ENCODE measurements at regions of chr6 and their contacts with region 1.

Region 1: DNA sequence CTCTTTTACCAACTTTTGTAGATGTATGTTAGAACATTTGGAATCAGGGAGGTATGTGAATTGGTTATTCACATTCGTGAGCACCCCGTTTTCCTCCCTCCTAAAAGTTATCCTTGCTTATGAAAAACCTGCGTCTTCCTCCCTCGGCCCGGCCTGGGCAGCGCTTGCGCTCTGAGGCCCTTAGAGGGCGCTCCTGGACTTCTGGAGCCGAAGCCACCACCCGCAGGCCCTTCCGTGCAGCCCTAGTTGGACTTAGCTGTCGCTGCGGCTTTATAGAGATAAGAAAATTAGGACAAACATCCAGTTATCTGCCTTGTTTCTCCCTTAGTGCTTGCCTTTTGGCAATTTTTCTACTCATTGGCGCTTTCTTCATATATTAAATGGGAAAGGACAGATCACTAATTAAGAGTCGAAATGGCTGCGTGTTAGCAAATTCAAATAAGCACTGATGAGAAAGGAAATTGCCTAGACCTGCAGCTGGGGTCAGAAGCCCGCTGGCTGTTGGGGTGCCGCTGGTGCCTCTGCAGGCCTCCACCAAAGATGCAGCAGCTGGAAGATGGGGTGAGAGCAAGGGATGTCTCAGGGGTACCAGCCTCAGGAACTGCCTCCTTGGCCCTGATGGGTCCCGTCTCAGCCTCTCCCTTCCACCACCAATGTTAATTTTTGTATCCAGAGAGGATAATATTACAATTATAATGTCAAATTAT is 5.2 kb downstream of the FNDC1 start:
- DNase-seq: peak; percentile 74 to 83
- H3K4me3 ChIP-seq: no peak overlapping the region
- H3K4me1 ChIP-seq: no peaks in the 10 kb centered on the region
- H3K27me3 ChIP-seq: peaks cover 52% of the 10 kb centered on the region

Region 2: DNA sequence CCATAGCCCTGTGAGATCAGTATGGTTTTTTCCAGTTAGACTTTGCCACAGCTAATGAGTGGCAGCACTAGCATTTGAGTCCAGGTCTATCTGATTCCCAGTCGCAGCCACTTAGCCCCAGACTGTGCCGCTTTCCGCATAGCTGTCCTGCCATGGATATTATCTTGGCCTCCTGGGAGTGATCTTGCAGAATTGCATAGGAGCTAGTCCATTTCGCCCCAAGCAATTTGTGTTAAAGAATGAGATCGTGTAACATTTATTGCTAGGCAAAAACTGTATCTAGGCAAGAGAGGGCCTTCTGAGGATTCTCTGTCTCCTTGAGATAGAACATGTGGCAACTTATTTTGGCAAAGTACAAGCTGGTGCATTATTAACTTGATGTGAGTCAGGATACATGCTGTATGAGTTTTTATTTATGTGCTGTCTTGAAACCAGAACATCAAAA is 429.4 kb before region 1 on chr6:
- in situ Hi-C with region 1: no loop called
- DNase-seq: no peak
- H3K4me3 ChIP-seq: no peak overlapping the region
- H3K4me1 ChIP-seq: no peaks in the 10 kb centered on the region
- H3K27me3 ChIP-seq: no peaks in the 10 kb centered on the region

Region 3: DNA sequence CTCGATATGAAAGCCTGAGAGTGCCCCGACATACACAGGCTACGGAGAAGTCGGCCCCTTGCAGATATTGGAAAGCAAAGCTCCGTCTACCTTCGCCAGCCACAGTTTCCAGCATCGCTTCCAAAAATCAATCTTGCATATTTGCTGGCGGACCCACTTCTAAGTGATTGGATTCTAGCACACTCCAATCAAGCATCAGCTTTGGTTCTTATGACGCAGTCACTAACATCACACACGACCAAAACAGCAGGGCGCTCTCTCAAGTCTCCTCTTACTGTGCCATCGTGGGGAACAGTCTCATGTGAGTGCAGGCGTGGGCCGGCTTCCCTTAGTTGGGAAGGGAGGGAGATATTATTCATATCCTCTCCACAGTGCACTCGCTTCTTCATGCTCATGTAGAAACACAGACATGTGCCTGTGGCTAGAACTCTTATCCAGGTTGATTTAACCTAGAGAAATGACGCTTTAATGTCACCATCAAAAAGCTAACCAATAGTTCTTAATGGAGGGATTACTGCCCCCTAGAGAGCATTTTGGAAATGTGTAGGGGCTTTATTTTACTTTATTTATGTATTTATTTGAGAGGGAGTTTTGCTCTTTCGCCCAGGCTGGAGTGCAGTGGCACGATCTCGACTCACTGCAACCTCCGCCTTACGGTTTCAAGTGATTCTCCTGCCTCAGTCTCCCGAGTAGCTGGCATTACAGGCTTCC is 288.9 kb after region 1 on chr6:
- in situ Hi-C with region 1: loop called (anchors 10 kb)
- DNase-seq: peak in 1 of 2 experiments; percentile 28
- H3K4me3 ChIP-seq: no peak overlapping the region
- H3K4me1 ChIP-seq: no peaks in the 10 kb centered on the region
- H3K27me3 ChIP-seq: no peaks in the 10 kb centered on the region

Region 4: GRCh38 chr6:159646733-159647132 is 472.3 kb after region 1 on chr6:
- in situ Hi-C with region 1: loop called (anchors 10 kb)
- DNase-seq: no peak
- H3K4me3 ChIP-seq: no peak overlapping the region
- H3K4me1 ChIP-seq: no peaks in the 10 kb centered on the region
- H3K27me3 ChIP-seq: no peaks in the 10 kb centered on the region